Transverse colon (tissue), 4 donors: ENCODE measurements at regions of chr10 and their contacts with region 1.

Region 1: GRCh38 chr10:86693721-86694369 is 25.5 kb downstream of the LDB3 start:
- DNase-seq: peak; percentile 51
- H3K4me3 ChIP-seq: no peak overlapping the region
- H3K27ac ChIP-seq: no peak overlapping the region
- H3K4me1 ChIP-seq: peaks cover 0 to 3% (median 0%) of the 10 kb centered on the region in 4 donors
- H3K27me3 ChIP-seq: no peaks in the 10 kb centered on the region
- CTCF ChIP-seq: peak in 4 of 5 experiments; percentile 59 to 69 (median 62)
- EP300 ChIP-seq: no peak
- POLR2A ChIP-seq: no peak

Region 2: DNA sequence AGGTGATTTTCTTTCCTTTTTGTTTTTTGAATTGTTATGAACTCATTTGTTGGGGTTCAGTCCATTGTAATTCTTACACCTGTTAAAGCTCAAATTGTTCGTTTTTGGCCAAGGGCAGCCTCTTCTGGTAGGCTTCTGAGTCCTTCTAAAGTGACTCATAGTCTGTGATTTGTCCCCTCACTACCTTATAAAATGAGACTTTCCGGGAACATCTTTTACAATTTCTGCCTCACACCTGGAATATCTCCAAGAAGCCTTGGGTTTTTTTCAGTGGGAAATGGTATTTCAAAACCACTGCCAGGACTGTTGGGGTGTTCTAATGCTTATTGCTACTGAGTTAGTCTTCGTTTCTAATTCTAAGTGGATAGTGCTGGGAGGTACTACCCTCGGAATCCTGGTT is 119.3 kb after region 1 on chr10:
- in situ Hi-C with region 1: no loop called
- intact Hi-C with region 1: no loop called
- DNase-seq: no peak
- H3K4me3 ChIP-seq: no peak overlapping the region
- H3K27ac ChIP-seq: peak overlapping the region; percentile 34 to 64 (median 50)
- H3K4me1 ChIP-seq: peaks cover 0 to 27% (median 11%) of the 10 kb centered on the region in 4 donors
- H3K27me3 ChIP-seq: no peaks in the 10 kb centered on the region
- CTCF ChIP-seq: no peak
- EP300 ChIP-seq: no peak
- POLR2A ChIP-seq: no peak

Region 3: GRCh38 chr10:86899670-86900276 is 205.9 kb after region 1 on chr10:
- in situ Hi-C with region 1: loop called in 2 of 4 experiments (anchors 5 to 10 kb)
- intact Hi-C with region 1: loop called (anchors 5 kb)
- DNase-seq: peak; percentile 71
- H3K4me3 ChIP-seq: no peak overlapping the region
- H3K27ac ChIP-seq: peak overlapping the region in 3 of 4 donors; percentile 48 to 57 (median 49)
- H3K4me1 ChIP-seq: peaks cover 4 to 23% (median 10%) of the 10 kb centered on the region in 4 donors
- H3K27me3 ChIP-seq: no peaks in the 10 kb centered on the region
- CTCF ChIP-seq: peak; percentile 70 to 83 (median 76)
- EP300 ChIP-seq: no peak
- POLR2A ChIP-seq: no peak